PC-3 (cell line): ENCODE measurements at regions of chr20 and their contacts with region 1.

Region 1: DNA sequence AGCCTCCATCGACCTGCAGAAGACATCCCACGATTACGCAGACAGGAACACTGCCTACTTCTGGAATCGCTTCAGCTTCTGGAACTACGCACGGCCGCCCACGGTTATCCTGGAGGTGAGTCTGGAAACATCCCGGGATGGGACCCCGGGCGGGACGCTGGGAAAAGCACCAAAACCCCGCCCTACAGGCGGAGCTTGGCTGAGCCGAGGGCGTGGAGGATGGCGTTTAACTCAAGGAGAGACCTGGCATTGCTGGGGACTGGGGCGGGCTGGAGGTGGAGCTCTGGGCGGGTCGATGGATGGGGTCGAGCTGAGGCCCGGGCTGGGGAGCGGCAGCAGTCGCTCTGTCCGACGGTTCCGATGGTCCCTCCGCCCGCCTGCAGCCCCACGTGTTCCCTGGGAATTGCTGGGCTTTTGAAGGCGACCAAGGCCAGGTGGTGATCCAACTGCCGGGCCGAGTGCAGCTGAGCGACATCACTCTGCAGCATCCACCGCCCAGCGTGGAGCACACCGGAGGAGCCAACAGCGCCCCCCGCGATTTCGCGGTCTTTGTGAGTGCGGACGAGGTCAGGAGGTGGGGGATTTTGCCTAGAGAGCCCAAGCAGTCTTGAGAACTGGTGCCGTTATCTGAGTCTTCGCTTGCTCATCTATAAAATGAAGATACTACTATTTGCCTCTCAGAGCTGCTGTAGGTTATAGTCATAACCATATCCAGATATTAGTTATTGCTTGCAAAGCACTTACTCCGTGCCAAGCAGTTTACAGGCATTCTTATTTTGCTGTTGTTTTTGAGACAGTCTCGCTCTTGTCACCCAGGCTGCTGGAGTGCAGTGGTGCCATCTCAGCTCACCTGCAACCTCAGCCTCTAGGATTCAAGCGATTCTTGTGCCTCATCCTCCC is 3.8 kb downstream of the SPAG4 start:
- DNase-seq: peak; percentile 96
- ATAC-seq: peak; percentile 61
- H3K4me3 ChIP-seq: peak overlapping the region; percentile 77
- H3K27ac ChIP-seq: no peak overlapping the region
- H3K4me1 ChIP-seq: peaks cover 32% of the 10 kb centered on the region; the same call in 1 of the 2 replicates
- H3K27me3 ChIP-seq: no peaks in the 10 kb centered on the region
- CTCF ChIP-seq: peak; percentile 82

Region 2: GRCh38 chr20:35511814-35512420 is 107.5 kb before region 1 on chr20:
- CTCF ChIA-PET with region 1: no interaction called
- POLR2A ChIA-PET with region 1: interaction called, 3 read pairs
- intact Hi-C with region 1: loop called (anchors 2 kb)
- DNase-seq: peak; percentile 68
- ATAC-seq: 0 out of 2 replicates have a peak, but pooled peaks have one; percentile 5
- H3K4me3 ChIP-seq: no peak overlapping the region
- H3K27ac ChIP-seq: no peak overlapping the region
- H3K4me1 ChIP-seq: peaks cover 25% of the 10 kb centered on the region
- H3K27me3 ChIP-seq: no peaks in the 10 kb centered on the region
- CTCF ChIP-seq: peak; percentile 92

Region 3: DNA sequence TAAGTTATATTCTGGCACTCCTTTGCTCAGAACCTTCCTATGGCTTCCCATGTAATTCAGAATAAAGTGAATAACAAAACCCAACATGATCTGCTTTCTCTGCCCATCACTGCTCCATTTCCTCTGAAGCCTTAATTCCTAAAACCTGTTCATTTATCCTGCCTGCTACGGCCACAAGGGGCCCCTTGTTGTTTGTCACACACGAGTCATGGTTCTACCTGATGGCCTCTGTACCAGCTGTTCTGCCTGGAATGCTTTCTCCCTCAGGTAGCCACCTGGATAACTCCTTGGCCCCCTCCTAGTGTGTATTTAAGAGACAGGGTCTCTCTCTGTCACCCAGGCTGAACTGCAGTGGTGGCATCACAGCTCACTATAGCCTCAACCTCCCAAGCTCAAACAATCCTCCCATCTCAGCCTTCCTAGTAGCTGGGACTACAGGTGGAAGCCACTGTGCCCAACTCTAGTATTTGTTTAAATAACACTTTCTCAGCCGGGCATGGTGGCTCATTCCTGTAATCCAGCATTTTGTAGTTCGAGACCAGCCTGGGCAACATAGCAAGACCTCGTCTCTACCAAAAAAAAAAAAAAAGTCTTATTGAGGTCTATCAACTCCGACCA is 50.7 kb before region 1 on chr20:
- CTCF ChIA-PET with region 1: no interaction called
- POLR2A ChIA-PET with region 1: no interaction called
- intact Hi-C with region 1: loop called (anchors 2 kb)
- DNase-seq: peak; percentile 70
- ATAC-seq: peak; percentile 97
- H3K4me3 ChIP-seq: no peak overlapping the region
- H3K27ac ChIP-seq: no peak overlapping the region
- H3K4me1 ChIP-seq: no peaks in the 10 kb centered on the region
- H3K27me3 ChIP-seq: no peaks in the 10 kb centered on the region
- CTCF ChIP-seq: peak; percentile 69

Region 4: DNA sequence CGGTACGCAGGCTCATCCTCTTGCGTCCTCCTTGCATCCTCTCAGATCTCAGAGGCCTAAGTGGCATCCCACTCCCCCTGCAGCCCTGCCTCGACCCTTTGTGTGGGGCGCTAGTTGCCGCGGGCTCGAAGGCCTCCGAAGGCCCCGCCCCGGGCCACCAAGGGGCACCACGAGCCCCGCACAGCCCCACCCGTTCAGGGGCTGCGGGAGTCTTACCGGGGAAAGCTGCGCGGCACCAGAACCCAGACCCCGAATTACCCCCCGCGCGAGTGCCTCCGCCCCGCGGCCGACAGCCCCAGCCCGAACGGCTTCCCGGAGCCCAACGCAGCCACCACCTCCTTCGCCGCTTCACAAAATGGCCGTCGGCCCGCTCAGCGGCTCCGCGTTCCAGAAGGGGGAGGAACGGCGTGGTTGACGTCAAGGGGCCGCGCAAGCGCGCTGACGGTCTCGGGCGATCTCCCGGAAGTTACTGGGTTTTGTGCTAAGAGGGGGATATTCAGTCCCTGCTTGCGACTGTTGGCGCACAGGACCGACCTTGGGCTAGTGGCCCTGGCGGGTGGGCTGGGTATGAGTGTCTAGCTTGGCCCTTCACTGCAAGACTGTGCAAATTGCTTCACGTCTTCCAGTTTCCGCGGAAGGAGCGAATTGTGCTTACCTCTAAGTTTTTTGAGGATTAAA is 45.2 kb after region 1 on chr20 and contains the starts of genes CPNE1 and RBM12:
- CTCF ChIA-PET with region 1: interaction called, 3 read pairs
- POLR2A ChIA-PET with region 1: interaction called, 4 read pairs
- intact Hi-C with region 1: loop called (anchors 1 kb)
- DNase-seq: peak; percentile 93
- ATAC-seq: peak; percentile 83
- H3K4me3 ChIP-seq: peak within 1 kb of the TSS; percentile 79
- H3K27ac ChIP-seq: peak within 1 kb of the TSS; percentile 76
- H3K4me1 ChIP-seq: peaks cover 33% of the 10 kb centered on the region
- H3K27me3 ChIP-seq: no peaks in the 10 kb centered on the region
- CTCF ChIP-seq: no peak
- total RNA-seq, gene CPNE1: 222 and 274 TPM in 2 replicates
- total RNA-seq, gene RBM12: 43.5 and 53.6 TPM in 2 replicates

Region 5: DNA sequence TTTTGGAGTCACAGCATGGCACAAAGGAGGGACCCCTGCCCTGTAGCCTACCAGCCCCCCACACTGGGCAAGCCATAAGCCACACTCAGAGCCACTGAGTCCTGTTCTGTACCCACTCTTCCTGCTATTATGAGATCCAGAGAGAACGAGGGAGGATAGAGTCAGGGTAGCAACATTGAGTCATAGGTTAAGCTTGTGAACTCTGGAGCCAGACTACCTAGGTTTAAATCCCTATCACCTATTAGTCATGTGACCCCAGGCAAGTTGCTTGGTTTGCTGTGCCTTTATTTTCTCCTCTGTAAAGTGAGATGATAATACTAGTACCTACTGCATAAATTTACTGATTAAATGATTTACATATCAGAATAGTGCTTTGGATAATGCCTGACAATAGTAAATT is 349.5 kb after region 1 on chr20:
- CTCF ChIA-PET with region 1: no interaction called
- POLR2A ChIA-PET with region 1: no interaction called
- intact Hi-C with region 1: no loop called
- DNase-seq: peak; percentile 44
- ATAC-seq: peak; percentile 35; the same call in 1 of the 2 replicates
- H3K4me3 ChIP-seq: no peak overlapping the region
- H3K27ac ChIP-seq: no peak overlapping the region
- H3K4me1 ChIP-seq: peaks cover 5% of the 10 kb centered on the region; the same call in 1 of the 2 replicates
- H3K27me3 ChIP-seq: no peaks in the 10 kb centered on the region
- CTCF ChIP-seq: no peak

Region 6: GRCh38 chr20:36248836-36249235 is 629.4 kb after region 1 on chr20:
- CTCF ChIA-PET with region 1: no interaction called
- POLR2A ChIA-PET with region 1: no interaction called
- intact Hi-C with region 1: no loop called
- DNase-seq: peak; percentile 46
- ATAC-seq: peak; percentile 97
- H3K4me3 ChIP-seq: no peak overlapping the region
- H3K27ac ChIP-seq: no peak overlapping the region
- H3K4me1 ChIP-seq: 0 out of 2 replicates have a peak, but pooled peaks cover 2% of the 10 kb centered on the region
- H3K27me3 ChIP-seq: no peaks in the 10 kb centered on the region
- CTCF ChIP-seq: no peak